A673 (cell line): ENCODE measurements at regions of chr18 and their contacts with region 1.

Region 1: DNA sequence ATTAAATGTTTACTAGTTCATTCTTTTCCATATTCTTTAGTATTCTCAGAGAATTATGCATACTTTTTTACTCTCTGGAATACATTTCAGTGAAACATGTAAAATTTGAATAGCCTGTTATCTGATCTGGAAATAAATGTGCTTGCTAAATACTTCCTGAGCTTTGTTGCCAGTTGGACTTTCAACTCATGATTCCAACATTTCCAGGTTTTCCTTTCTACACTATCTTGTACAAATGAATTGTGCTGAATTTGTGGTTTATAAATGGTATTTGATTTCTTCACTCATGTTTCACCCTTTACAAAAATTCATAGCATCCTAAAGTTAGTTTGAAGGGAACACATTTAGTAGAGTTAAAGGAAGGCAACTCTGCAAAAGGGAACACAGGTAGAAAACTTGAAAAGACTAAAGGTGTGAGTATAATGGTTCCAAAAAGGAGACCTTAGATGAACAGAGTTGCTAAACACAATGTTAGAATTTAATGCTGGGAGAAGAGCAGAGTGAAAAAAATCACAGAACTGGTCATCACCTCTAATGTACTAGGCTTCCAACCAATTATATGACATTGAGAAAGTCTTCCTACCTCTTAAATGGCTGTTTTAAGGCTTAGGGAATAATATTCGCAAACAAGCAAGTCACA is 28.6 kb downstream of the SYT4 start:
- DNase-seq: no peak
- H3K4me3 ChIP-seq: no peak overlapping the region
- H3K27ac ChIP-seq: no peak overlapping the region
- H3K4me1 ChIP-seq: no peaks in the 10 kb centered on the region
- H3K27me3 ChIP-seq: no peaks in the 10 kb centered on the region
- CTCF ChIP-seq: no peak

Region 2: DNA sequence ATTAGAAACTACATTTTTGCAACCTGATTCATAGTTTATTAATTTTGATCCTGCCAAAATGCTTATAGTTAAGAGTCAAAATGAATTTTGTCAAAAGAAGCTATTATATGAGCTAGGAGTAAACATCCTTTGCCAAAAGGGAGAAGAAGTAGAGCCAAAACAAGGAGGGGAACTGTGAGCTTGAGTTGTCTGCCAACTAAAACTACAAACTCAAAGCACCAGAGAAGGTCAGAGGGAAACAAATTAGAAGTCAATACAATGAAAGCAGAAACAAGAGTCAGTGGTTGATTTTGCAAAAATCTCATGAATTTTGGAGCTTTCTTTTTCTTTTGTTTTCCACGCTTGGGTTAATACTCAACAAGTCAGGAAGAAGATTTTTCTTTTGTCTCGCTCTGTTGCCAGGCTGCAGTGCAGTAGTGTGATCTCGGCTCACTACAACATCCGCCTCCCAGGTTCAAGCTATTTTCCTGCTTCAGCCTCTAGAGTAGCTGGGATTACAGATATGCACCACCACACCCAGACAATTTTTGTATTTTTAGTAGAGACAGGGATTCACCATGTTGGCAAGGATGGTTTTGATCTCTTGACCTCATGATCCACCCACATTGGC is 641.7 kb before region 1 on chr18:
- CTCF ChIA-PET with region 1: no interaction called
- POLR2A ChIA-PET with region 1: no interaction called
- intact Hi-C with region 1: loop called (anchors 10 kb)
- DNase-seq: no peak
- H3K4me3 ChIP-seq: no peak overlapping the region
- H3K27ac ChIP-seq: no peak overlapping the region
- H3K4me1 ChIP-seq: no peaks in the 10 kb centered on the region
- H3K27me3 ChIP-seq: no peaks in the 10 kb centered on the region
- CTCF ChIP-seq: no peak

Region 3: DNA sequence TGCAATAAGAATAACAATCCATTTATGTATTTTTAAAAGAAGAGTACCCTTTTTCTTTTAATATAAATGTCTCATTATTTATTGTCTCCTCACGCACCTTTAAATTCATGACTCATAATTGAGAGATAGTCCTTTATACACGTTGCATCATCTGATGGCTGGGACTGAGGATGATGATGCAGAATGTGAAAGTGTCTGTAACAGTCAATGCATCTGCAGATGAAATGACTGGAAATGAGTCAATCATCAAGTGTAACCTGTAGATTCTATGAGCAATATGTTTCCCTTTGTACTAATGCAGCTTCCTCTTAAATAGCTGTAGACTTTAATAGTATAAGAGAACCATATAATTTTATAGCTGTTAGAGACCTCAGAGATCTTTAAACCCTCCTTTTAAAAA is 54.6 kb after region 1 on chr18:
- CTCF ChIA-PET with region 1: no interaction called
- POLR2A ChIA-PET with region 1: no interaction called
- intact Hi-C with region 1: loop called (anchors 5 kb)
- DNase-seq: no peak
- H3K4me3 ChIP-seq: no peak overlapping the region
- H3K27ac ChIP-seq: no peak overlapping the region
- H3K4me1 ChIP-seq: no peaks in the 10 kb centered on the region
- H3K27me3 ChIP-seq: no peaks in the 10 kb centered on the region
- CTCF ChIP-seq: no peak